Activated CD8-positive, alpha-beta memory T cell treated with anti-CD3 and anti-CD28 coated beads, Interleukin-2, amount 10 ng/mL, durations not matched to agents 7 days and 5 days (primary cell): ENCODE measurements at regions of chr14 and their contacts with region 1.

Region 1: GRCh38 chr14:59507063-59507780 is 22.9 kb downstream of the JKAMP start:
- DNase-seq: peak; percentile 70
- ATAC-seq: peak; percentile 71
- H3K4me3 Mint-ChIP-seq: no peak overlapping the region
- H3K27ac Mint-ChIP-seq: no peak overlapping the region
- H3K4me1 Mint-ChIP-seq: peaks cover 5% of the 10 kb centered on the region
- H3K27me3 Mint-ChIP-seq: peaks cover 6% of the 10 kb centered on the region

Region 2: GRCh38 chr14:59330455-59330854 is 176.8 kb before region 1 on chr14:
- CTCF ChIA-PET with region 1: no interaction called
- DNase-seq: no peak
- ATAC-seq: no peak
- H3K4me3 Mint-ChIP-seq: no peak overlapping the region
- H3K27ac Mint-ChIP-seq: no peak overlapping the region
- H3K4me1 Mint-ChIP-seq: peaks cover 3% of the 10 kb centered on the region
- H3K27me3 Mint-ChIP-seq: no peaks in the 10 kb centered on the region

Region 3: GRCh38 chr14:59576332-59577294 is 69.4 kb after region 1 on chr14 and contains the start of gene CCDC175:
- CTCF ChIA-PET with region 1: interaction called, 26 read pairs
- DNase-seq: peak; percentile 88
- ATAC-seq: peak; percentile 96
- H3K4me3 Mint-ChIP-seq: peak within 1 kb of the TSS; percentile 64
- H3K27ac Mint-ChIP-seq: no peak within 1 kb of the TSS
- H3K4me1 Mint-ChIP-seq: peaks cover 9% of the 10 kb centered on the region
- H3K27me3 Mint-ChIP-seq: peaks cover 20% of the 10 kb centered on the region
- total RNA-seq, gene CCDC175: not detected

Region 4: GRCh38 chr14:59768855-59769375 is 261.7 kb after region 1 on chr14:
- CTCF ChIA-PET with region 1: no interaction called
- DNase-seq: no peak
- ATAC-seq: no peak
- H3K4me3 Mint-ChIP-seq: no peak overlapping the region
- H3K27ac Mint-ChIP-seq: no peak overlapping the region
- H3K4me1 Mint-ChIP-seq: no peaks in the 10 kb centered on the region
- H3K27me3 Mint-ChIP-seq: no peaks in the 10 kb centered on the region